ENCODE measurements at regions of chr20 and their contacts with region 1.

Region 1: DNA sequence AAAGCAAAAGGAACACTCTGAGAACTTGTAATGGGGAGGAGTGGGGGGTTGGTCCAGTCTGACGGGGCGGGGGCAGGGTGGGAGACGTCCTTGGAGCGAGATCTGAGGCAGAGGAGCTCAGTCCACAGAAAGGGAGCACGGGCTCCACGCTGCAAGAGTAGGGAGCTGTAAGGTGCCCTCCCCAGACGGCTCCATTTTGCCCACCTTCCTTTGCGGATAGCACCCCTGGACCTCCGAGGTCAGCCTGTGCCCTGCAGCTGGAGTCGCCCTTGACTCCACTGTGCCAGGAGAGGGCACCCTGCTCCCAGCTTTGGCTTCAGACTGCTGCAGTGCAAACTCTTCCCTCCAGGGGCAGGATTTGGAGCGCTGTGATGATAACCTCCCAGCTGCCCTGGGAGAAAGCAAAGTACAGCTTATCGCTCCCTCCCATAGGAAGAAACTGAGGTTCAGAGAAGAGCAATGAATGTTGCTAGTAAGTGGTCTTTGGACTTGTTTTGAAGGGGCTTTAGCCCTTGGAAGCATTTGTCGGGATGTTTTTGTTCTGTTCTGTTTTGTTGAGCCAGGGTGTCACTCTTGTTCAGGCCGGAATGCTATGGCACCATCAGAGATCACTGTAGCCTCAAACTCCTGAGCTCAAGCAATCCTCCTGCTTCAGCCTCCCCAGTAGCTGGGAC is 9.5 kb upstream of the AHCY start:
- DNase-seq: peak; percentile 87
- H3K4me3 ChIP-seq: peak overlapping the region in 1 of 3 experiments; percentile 11
- H3K27ac ChIP-seq: no peak overlapping the region
- H3K4me1 ChIP-seq: peaks cover 9% of the 10 kb centered on the region
- H3K27me3 ChIP-seq: no peaks in the 10 kb centered on the region
- CTCF ChIP-seq: peak; percentile 100
- POLR2A ChIP-seq: no peak

Region 2: GRCh38 chr20:34334654-34335407 is 22.1 kb after region 1 on chr20:
- CTCF ChIA-PET with region 1: interaction called, 19 read pairs
- POLR2A ChIA-PET with region 1: no interaction called
- dilution Hi-C with region 1: no loop called
- intact Hi-C with region 1: no loop called
- DNase-seq: peak; percentile 52
- H3K4me3 ChIP-seq: no peak overlapping the region
- H3K27ac ChIP-seq: no peak overlapping the region
- H3K4me1 ChIP-seq: peaks cover 8% of the 10 kb centered on the region
- H3K27me3 ChIP-seq: no peaks in the 10 kb centered on the region
- CTCF ChIP-seq: no peak
- POLR2A ChIP-seq: no peak

Region 3: DNA sequence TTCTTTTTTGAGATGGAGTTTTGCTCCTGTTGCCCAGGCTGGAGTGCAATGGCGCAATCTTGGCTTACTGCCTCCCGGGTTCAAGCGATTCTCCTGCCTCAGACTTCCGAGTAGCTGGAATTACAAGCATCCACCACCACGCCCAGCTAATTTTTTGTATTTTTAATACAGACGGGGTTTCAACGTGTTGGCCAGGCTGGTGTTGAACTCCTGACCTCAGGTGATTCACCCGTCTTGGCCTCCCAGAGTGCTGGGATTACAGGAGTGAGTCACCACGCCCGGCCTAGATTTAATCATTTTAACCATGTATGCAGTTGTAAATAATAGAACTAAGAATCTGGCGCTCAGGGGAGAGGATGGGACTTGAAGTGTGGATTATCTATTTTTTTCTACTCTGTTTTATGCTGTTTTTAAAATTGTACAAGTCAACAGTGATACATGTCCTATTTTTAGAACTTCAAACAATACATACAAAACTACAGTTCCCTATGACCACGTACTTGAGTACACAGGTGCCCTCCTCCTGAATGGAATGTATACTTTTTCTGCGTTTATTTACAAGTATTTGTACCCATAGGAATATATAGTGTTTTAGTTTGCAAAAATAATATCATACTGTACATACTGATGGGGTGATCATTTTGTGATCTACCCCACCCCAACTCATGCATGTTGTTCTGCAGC is 78.2 kb after region 1 on chr20:
- CTCF ChIA-PET with region 1: interaction called, 10 read pairs
- POLR2A ChIA-PET with region 1: no interaction called
- dilution Hi-C with region 1: no loop called
- intact Hi-C with region 1: no loop called
- DNase-seq: peak; percentile 79
- H3K4me3 ChIP-seq: no peak overlapping the region
- H3K27ac ChIP-seq: no peak overlapping the region
- H3K4me1 ChIP-seq: peaks cover 31% of the 10 kb centered on the region
- H3K27me3 ChIP-seq: no peaks in the 10 kb centered on the region
- CTCF ChIP-seq: no peak
- POLR2A ChIP-seq: no peak

Region 4: GRCh38 chr20:34427331-34427730 is 114.7 kb after region 1 on chr20:
- CTCF ChIA-PET with region 1: interaction called, 14 read pairs
- POLR2A ChIA-PET with region 1: no interaction called
- dilution Hi-C with region 1: no loop called
- intact Hi-C with region 1: no loop called
- DNase-seq: no peak
- H3K4me3 ChIP-seq: no peak overlapping the region
- H3K27ac ChIP-seq: no peak overlapping the region
- H3K4me1 ChIP-seq: no peaks in the 10 kb centered on the region
- H3K27me3 ChIP-seq: no peaks in the 10 kb centered on the region
- CTCF ChIP-seq: no peak
- POLR2A ChIP-seq: no peak

Region 5: GRCh38 chr20:34485068-34485634 is 172.5 kb after region 1 on chr20:
- CTCF ChIA-PET with region 1: interaction called, 12 read pairs
- POLR2A ChIA-PET with region 1: no interaction called
- dilution Hi-C with region 1: no loop called
- intact Hi-C with region 1: no loop called
- DNase-seq: no peak
- H3K4me3 ChIP-seq: no peak overlapping the region
- H3K27ac ChIP-seq: no peak overlapping the region
- H3K4me1 ChIP-seq: no peaks in the 10 kb centered on the region
- H3K27me3 ChIP-seq: no peaks in the 10 kb centered on the region
- CTCF ChIP-seq: no peak
- POLR2A ChIP-seq: no peak

Region 6: GRCh38 chr20:34522969-34523871 is 210.5 kb after region 1 on chr20:
- CTCF ChIA-PET with region 1: interaction called, 107 read pairs
- POLR2A ChIA-PET with region 1: no interaction called
- dilution Hi-C with region 1: no loop called
- intact Hi-C with region 1: loop called (anchors 1 kb)
- DNase-seq: peak; percentile 61
- H3K4me3 ChIP-seq: no peak overlapping the region
- H3K27ac ChIP-seq: no peak overlapping the region
- H3K4me1 ChIP-seq: peaks cover 21% of the 10 kb centered on the region
- H3K27me3 ChIP-seq: no peaks in the 10 kb centered on the region
- CTCF ChIP-seq: peak; percentile 57 to 85
- POLR2A ChIP-seq: no peak

Region 7: DNA sequence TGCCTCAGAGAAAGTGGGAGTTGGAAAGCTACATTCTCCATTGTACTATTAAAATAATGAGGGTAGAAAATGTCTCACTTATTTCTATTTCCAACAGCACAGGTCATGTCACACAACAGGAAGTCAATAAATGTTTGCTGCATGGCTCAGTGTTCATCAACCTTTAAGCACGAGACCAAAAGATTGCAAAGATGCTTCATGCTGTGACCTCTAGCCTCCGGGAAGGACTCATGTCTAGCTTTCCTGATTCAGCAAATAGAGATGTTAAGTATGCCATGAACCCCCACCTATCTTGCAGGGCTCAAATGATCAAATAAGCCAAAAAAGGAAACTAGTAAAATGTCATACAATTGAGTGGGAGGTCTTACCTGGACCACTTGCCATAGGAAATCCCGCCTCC is 455.4 kb after region 1 on chr20:
- CTCF ChIA-PET with region 1: interaction called, 40 read pairs
- POLR2A ChIA-PET with region 1: no interaction called
- dilution Hi-C with region 1: no loop called
- intact Hi-C with region 1: loop called (anchors 5 kb)
- DNase-seq: peak; percentile 14
- H3K4me3 ChIP-seq: no peak overlapping the region
- H3K27ac ChIP-seq: no peak overlapping the region
- H3K4me1 ChIP-seq: peaks cover 12% of the 10 kb centered on the region
- H3K27me3 ChIP-seq: no peaks in the 10 kb centered on the region
- CTCF ChIP-seq: no peak
- POLR2A ChIP-seq: no peak